T-cell (primary cell): ENCODE measurements at regions of chr10 and their contacts with region 1.

Region 1: GRCh38 chr10:68446179-68446578 is 25.6 kb downstream of the DNA2 start:
- DNase-seq: no peak
- ATAC-seq: no peak
- H3K4me3 ChIP-seq: no peak overlapping the region
- H3K4me3 Mint-ChIP-seq: no peak overlapping the region
- H3K27ac ChIP-seq: no peak overlapping the region
- H3K27ac Mint-ChIP-seq: no peak overlapping the region
- H3K4me1 ChIP-seq: no peaks in the 10 kb centered on the region
- H3K4me1 Mint-ChIP-seq: no peaks in the 10 kb centered on the region
- H3K27me3 ChIP-seq: no peaks in the 10 kb centered on the region
- H3K27me3 Mint-ChIP-seq: no peaks in the 10 kb centered on the region

Region 2: GRCh38 chr10:68461032-68461431 is 14.9 kb after region 1 on chr10:
- CTCF ChIA-PET with region 1: no interaction called
- POLR2A ChIA-PET with region 1: interaction called, 6 to 12 read pairs
- DNase-seq: no peak
- ATAC-seq: no peak
- H3K4me3 ChIP-seq: no peak overlapping the region
- H3K4me3 Mint-ChIP-seq: no peak overlapping the region
- H3K27ac ChIP-seq: no peak overlapping the region
- H3K27ac Mint-ChIP-seq: no peak overlapping the region
- H3K4me1 ChIP-seq: no peaks in the 10 kb centered on the region
- H3K4me1 Mint-ChIP-seq: no peaks in the 10 kb centered on the region
- H3K27me3 ChIP-seq: no peaks in the 10 kb centered on the region
- H3K27me3 Mint-ChIP-seq: no peaks in the 10 kb centered on the region

Region 3: GRCh38 chr10:68492118-68492517 is 45.9 kb after region 1 on chr10:
- CTCF ChIA-PET with region 1: no interaction called
- POLR2A ChIA-PET with region 1: no interaction called
- DNase-seq: no peak
- ATAC-seq: no peak
- H3K4me3 ChIP-seq: no peak overlapping the region
- H3K4me3 Mint-ChIP-seq: no peak overlapping the region
- H3K27ac ChIP-seq: no peak overlapping the region
- H3K27ac Mint-ChIP-seq: no peak overlapping the region
- H3K4me1 ChIP-seq: no peaks in the 10 kb centered on the region
- H3K4me1 Mint-ChIP-seq: no peaks in the 10 kb centered on the region
- H3K27me3 ChIP-seq: no peaks in the 10 kb centered on the region
- H3K27me3 Mint-ChIP-seq: no peaks in the 10 kb centered on the region